ENCODE measurements at regions of chrX and their contacts with region 1.

Region 1: GRCh38 chrX:131830400-131831184 is 192.5 kb upstream of the STK26 start:
- DNase-seq: peak in 8 of 9 donors; percentile 59 to 83 (median 72)
- ATAC-seq: peak; percentile 76
- H3K4me3 ChIP-seq: peak overlapping the region; percentile 37
- H3K4me3 Mint-ChIP-seq: peak overlapping the region; percentile 61 to 90 (median 72)
- H3K27ac ChIP-seq: peak overlapping the region; percentile 55
- H3K27ac Mint-ChIP-seq: peak overlapping the region; percentile 42 to 91 (median 81)
- H3K4me1 ChIP-seq: peaks cover 0 to 14% of the 10 kb centered on the region in 2 donors
- H3K4me1 Mint-ChIP-seq: peaks cover 1 to 44% (median 35%) of the 10 kb centered on the region in 7 donors
- H3K27me3 ChIP-seq: no peaks in the 10 kb centered on the region
- H3K27me3 Mint-ChIP-seq: no peaks in the 10 kb centered on the region

Region 2: GRCh38 chrX:130691576-130691975 is 1139.0 kb before region 1 on chrX:
- CTCF ChIA-PET with region 1: no interaction called
- POLR2A ChIA-PET with region 1: no interaction called
- intact Hi-C with region 1: no loop called
- DNase-seq: no peak
- ATAC-seq: no peak
- H3K4me3 ChIP-seq: no peak overlapping the region
- H3K4me3 Mint-ChIP-seq: no peak overlapping the region
- H3K27ac ChIP-seq: no peak overlapping the region
- H3K27ac Mint-ChIP-seq: no peak overlapping the region
- H3K4me1 ChIP-seq: no peaks in the 10 kb centered on the region
- H3K4me1 Mint-ChIP-seq: no peaks in the 10 kb centered on the region
- H3K27me3 ChIP-seq: no peaks in the 10 kb centered on the region
- H3K27me3 Mint-ChIP-seq: no peaks in the 10 kb centered on the region

Region 3: DNA sequence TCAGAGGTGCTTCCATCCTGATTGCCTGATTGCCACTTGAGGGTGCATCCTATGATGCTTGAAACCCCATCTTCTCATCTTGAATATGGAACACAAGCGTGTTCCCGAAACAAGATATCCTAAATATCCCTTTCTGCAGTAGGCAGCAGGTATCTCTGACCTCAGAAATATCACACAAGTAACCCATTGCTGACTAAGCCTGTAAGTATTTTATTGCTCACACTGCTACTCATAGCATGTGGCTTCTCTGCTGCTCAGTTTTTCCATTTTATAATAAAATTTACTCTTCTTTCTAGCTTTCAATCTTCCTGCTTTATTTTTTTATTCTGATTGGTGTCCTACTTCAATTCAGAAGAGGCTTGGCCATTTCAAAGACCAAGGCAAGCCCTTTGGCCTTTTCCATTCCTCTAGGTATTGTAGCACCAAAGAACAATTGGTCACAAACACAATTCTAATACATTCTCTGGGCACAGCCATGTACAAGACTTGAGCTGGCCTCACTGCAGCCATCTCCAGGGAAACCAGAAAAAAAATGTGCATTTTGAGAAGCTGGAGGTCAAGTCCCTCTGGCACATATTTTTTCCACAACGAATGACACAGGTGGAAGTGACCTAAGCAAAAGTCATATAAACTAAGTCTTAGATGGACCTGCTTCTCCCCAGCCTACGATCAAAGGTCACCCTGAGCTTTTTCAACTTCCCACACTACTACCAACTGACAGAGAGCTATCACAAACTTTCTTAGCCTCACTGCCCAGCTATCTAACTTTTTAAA is 179.8 kb before region 1 on chrX:
- CTCF ChIA-PET with region 1: no interaction called
- POLR2A ChIA-PET with region 1: no interaction called
- intact Hi-C with region 1: no loop called
- DNase-seq: no peak
- ATAC-seq: no peak
- H3K4me3 ChIP-seq: no peak overlapping the region
- H3K4me3 Mint-ChIP-seq: no peak overlapping the region
- H3K27ac ChIP-seq: no peak overlapping the region
- H3K27ac Mint-ChIP-seq: no peak overlapping the region
- H3K4me1 ChIP-seq: no peaks in the 10 kb centered on the region
- H3K4me1 Mint-ChIP-seq: no peaks in the 10 kb centered on the region
- H3K27me3 ChIP-seq: no peaks in the 10 kb centered on the region
- H3K27me3 Mint-ChIP-seq: peaks cover 0 to 14% (median 8%) of the 10 kb centered on the region in 5 donors

Region 4: DNA sequence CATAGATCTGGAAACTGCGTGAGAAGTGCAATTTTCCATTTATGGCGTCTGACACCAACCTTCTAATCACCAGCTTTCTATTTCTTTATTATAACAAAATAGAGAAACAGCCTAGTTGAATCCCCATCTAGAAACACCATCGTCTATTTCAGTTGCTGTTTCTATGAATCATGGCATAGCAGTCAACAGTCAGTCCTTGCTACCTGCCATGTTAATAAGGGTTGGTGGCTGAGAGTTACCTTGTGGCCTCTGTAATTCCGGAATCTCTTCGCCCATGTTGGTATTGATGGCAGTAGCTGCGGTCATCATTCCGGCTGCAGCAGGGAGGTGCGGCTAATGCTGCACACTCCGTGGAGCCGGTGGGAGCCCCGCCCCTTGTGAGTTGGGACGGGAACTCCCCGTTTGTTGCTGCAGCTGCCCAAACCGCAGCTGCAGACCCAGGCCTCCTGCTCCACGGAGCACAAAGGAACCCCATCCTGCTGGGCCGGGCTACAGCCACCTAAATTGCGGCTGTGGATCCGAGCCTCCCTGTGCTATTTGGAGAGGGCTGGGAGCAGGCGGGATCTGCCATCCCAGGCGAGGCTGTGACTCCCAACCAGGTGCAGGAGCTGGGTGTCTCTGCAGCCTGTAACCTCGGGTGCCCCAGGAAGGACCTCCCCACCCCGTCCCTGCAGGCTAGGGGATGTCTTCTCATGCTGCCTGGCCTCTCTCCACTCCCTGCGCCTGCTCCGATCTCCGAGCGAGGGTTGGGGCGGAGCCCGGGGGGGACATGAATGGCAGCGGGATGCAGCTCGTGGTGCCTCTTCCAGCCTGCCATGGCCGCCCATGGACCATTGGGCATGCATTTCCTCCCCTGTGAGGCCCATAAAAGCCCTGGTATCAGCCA is 77.1 kb after region 1 on chrX:
- CTCF ChIA-PET with region 1: no interaction called
- POLR2A ChIA-PET with region 1: no interaction called
- intact Hi-C with region 1: no loop called
- DNase-seq: no peak
- ATAC-seq: no peak
- H3K4me3 ChIP-seq: no peak overlapping the region
- H3K4me3 Mint-ChIP-seq: no peak overlapping the region
- H3K27ac ChIP-seq: no peak overlapping the region
- H3K27ac Mint-ChIP-seq: no peak overlapping the region
- H3K4me1 ChIP-seq: no peaks in the 10 kb centered on the region
- H3K4me1 Mint-ChIP-seq: no peaks in the 10 kb centered on the region
- H3K27me3 ChIP-seq: no peaks in the 10 kb centered on the region
- H3K27me3 Mint-ChIP-seq: no peaks in the 10 kb centered on the region

Region 5: GRCh38 chrX:132144061-132144460 is 313.5 kb after region 1 on chrX:
- CTCF ChIA-PET with region 1: no interaction called
- POLR2A ChIA-PET with region 1: no interaction called
- intact Hi-C with region 1: no loop called
- DNase-seq: no peak
- ATAC-seq: no peak
- H3K4me3 ChIP-seq: no peak overlapping the region
- H3K4me3 Mint-ChIP-seq: no peak overlapping the region
- H3K27ac ChIP-seq: no peak overlapping the region
- H3K27ac Mint-ChIP-seq: no peak overlapping the region
- H3K4me1 ChIP-seq: no peaks in the 10 kb centered on the region
- H3K4me1 Mint-ChIP-seq: no peaks in the 10 kb centered on the region
- H3K27me3 ChIP-seq: no peaks in the 10 kb centered on the region
- H3K27me3 Mint-ChIP-seq: peaks cover 0 to 17% (median 9%) of the 10 kb centered on the region in 5 donors

Region 6: DNA sequence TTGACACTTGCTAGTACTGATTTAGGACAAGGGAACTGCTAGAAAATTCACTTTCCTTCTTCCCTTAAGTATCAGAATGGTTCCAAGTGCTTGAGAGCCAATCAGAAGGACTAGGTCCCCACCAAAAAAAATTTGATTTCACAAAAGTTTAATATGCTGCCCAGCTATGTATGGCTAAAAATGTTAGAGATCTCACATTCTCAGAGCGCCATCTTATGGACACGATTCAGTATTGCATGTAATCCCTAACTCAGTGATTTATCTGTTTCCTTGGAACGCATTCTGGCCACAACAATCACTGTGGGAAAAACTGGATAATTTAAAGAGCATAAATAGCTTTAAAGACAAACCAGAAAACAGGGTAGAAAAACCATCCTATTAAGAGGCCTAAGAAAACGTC is 1839.8 kb after region 1 on chrX:
- CTCF ChIA-PET with region 1: no interaction called
- POLR2A ChIA-PET with region 1: no interaction called
- intact Hi-C with region 1: loop called (anchors 2 to 5 kb)
- DNase-seq: peak in 5 of 9 donors; percentile 2 to 6 (median 5)
- ATAC-seq: no peak
- H3K4me3 ChIP-seq: no peak overlapping the region
- H3K4me3 Mint-ChIP-seq: no peak overlapping the region
- H3K27ac ChIP-seq: no peak overlapping the region
- H3K27ac Mint-ChIP-seq: no peak overlapping the region
- H3K4me1 ChIP-seq: no peaks in the 10 kb centered on the region
- H3K4me1 Mint-ChIP-seq: no peaks in the 10 kb centered on the region
- H3K27me3 ChIP-seq: no peaks in the 10 kb centered on the region
- H3K27me3 Mint-ChIP-seq: no peaks in the 10 kb centered on the region